ENCODE measurements at regions of chr14 and their contacts with region 1.

Region 1: DNA sequence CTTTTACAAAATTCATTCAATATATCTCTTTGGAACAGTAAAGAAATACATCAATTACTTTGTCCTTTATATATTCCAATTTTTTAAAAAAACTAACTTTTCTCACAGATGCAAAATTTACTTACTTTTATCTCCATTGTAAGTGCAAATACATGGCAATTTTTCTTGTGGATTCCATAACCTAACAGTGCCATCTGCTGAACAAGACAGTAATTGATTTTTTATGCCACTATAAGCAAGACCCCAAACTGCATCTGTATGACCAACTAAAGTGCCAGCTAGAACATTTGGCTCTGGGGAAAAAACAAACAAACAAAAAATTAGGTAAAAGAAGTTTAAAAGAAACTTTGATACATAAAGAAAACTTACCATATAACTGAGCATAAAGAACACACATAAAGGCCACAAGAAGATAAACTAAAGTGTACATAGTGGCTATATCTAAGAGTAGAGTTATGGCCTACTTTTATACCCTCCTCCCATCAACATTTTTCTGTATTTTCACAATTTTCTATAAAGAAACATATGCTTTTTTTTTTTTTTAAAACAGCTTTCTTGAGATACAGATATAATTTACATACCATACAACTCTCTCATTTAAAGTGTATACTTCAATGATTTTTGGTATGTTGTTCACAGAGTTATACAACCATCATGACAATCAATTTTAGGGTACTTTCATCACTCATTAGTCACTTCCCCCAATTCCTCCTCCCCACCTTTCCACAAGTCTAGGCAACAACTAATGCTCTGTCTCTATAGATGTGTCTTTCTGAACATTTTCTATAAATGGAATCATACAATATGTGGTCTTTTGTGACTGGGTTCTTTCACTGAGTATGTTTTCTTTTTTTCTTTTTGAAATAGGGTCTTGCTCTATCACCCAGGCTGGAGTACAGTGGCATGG is 32.6 kb downstream of the COCH start:
- DNase-seq: no peak

Region 2: DNA sequence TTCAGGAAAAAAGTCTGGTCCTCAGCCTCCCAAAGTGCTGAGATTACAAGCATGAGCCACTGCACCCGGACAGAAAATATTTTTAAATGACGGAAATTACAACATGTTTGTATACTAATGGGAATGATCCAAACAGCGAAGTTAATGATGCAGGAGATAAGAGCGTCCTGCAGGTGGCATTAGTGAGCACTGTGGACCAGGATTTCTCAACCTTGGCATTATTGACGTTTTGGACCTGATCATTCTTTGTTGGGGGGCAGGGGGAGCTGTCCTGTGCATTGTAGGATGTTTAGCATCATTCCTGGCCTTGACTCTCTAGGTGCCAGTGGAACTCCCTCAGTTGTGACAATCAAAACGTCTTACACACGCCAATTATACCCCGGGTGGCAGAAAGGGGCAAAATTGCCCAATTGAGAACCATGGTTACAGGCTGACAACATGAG is 250.8 kb before region 1 on chr14:
- intact Hi-C with region 1: loop called (anchors 2 kb)
- DNase-seq: peak in 4 of 10 donors; percentile 6 to 57 (median 18)

Region 3: GRCh38 chr14:30803185-30803584 is 103.8 kb before region 1 on chr14:
- intact Hi-C with region 1: no loop called
- DNase-seq: no peak

Measured in posterior cingulate gyrus (tissue), 11 donors.